SK-N-SH (cell line): ENCODE measurements at regions of chr5 and their contacts with region 1.

Region 1: GRCh38 chr5:172450861-172451695 is 3.2 kb downstream of the SH3PXD2B start:
- DNase-seq: peak; percentile 64
- H3K4me3 ChIP-seq: no peak overlapping the region; a peak in 1 of 4 replicates
- H3K27ac ChIP-seq: peak overlapping the region in 1 of 2 experiments; percentile 92; a peak in 2 of 4 replicates
- H3K4me1 ChIP-seq: peaks cover 16 to 36% of the 10 kb centered on the region in 2 experiments; a peak in 2 of 4 replicates
- H3K27me3 ChIP-seq: no peaks in the 10 kb centered on the region
- CTCF ChIP-seq: peak; percentile 82
- EP300 ChIP-seq: no peak
- RAD21 ChIP-seq: peak; percentile 46

Region 2: DNA sequence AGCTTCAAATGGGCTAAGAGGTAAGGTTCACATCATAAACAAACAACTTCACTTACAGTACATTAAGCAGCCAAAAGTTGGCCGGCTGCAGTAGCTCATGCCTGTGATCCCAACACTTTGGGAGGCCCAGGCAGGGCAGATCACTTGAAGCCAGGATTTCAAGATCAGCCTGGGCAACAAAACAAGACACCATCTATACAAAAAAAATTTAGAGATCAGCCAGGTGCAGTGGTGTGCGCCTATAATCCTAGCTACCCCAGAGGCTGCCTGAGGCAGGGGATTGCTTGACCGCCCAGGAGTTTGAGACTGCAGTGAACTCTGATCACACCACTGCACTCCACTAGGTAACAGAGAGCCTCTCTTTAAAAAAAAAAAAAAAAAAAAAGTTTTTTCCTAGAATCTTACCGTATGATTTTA is 184.4 kb before region 1 on chr5:
- CTCF ChIA-PET with region 1: no interaction called
- POLR2A ChIA-PET with region 1: no interaction called
- DNase-seq: no peak
- H3K4me3 ChIP-seq: no peak overlapping the region
- H3K27ac ChIP-seq: no peak overlapping the region
- H3K4me1 ChIP-seq: no peaks in the 10 kb centered on the region
- H3K27me3 ChIP-seq: no peaks in the 10 kb centered on the region
- CTCF ChIP-seq: no peak
- EP300 ChIP-seq: no peak
- RAD21 ChIP-seq: no peak

Region 3: GRCh38 chr5:172347496-172348052 is 103.5 kb before region 1 on chr5:
- CTCF ChIA-PET with region 1: interaction called, 12 read pairs
- POLR2A ChIA-PET with region 1: no interaction called
- DNase-seq: no peak
- H3K4me3 ChIP-seq: no peak overlapping the region
- H3K27ac ChIP-seq: no peak overlapping the region
- H3K4me1 ChIP-seq: no peaks in the 10 kb centered on the region
- H3K27me3 ChIP-seq: no peaks in the 10 kb centered on the region
- CTCF ChIP-seq: no peak
- EP300 ChIP-seq: no peak
- RAD21 ChIP-seq: no peak

Region 4: DNA sequence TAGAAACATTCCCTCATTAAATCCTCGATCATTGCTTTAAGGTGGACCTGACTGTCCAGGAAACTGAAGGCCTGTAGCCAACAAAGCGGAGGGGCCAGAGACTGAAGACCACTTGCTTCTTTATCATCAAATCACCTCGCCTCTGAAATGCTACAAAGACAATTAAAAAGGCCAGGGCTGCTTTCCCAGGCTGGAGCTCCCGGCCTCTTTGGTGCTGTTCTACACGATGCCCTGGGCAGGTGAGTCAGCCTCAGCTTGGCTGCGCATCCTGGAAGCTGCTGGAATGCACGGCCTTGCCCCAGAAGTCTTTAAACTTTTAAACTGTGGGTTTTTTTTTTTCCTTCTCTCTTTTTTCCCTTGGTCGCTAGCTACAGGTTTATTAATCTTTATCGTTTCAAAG is 43.3 kb before region 1 on chr5:
- CTCF ChIA-PET with region 1: interaction called, 19 read pairs
- POLR2A ChIA-PET with region 1: no interaction called
- DNase-seq: no peak
- H3K4me3 ChIP-seq: no peak overlapping the region
- H3K27ac ChIP-seq: peak overlapping the region in 1 of 2 experiments; percentile 8; a peak in 2 of 4 replicates
- H3K4me1 ChIP-seq: peaks cover 16 to 21% of the 10 kb centered on the region in 2 experiments
- H3K27me3 ChIP-seq: no peaks in the 10 kb centered on the region
- CTCF ChIP-seq: no peak
- EP300 ChIP-seq: no peak
- RAD21 ChIP-seq: no peak

Region 5: GRCh38 chr5:172420240-172420943 is 30.7 kb before region 1 on chr5:
- CTCF ChIA-PET with region 1: interaction called, 25 read pairs
- POLR2A ChIA-PET with region 1: no interaction called
- DNase-seq: no peak
- H3K4me3 ChIP-seq: no peak overlapping the region
- H3K27ac ChIP-seq: peak overlapping the region in 1 of 2 experiments; percentile 71; a peak in 1 of 4 replicates
- H3K4me1 ChIP-seq: peaks cover 30 to 32% of the 10 kb centered on the region in 2 experiments
- H3K27me3 ChIP-seq: no peaks in the 10 kb centered on the region
- CTCF ChIP-seq: no peak
- EP300 ChIP-seq: no peak
- RAD21 ChIP-seq: no peak

Region 6: DNA sequence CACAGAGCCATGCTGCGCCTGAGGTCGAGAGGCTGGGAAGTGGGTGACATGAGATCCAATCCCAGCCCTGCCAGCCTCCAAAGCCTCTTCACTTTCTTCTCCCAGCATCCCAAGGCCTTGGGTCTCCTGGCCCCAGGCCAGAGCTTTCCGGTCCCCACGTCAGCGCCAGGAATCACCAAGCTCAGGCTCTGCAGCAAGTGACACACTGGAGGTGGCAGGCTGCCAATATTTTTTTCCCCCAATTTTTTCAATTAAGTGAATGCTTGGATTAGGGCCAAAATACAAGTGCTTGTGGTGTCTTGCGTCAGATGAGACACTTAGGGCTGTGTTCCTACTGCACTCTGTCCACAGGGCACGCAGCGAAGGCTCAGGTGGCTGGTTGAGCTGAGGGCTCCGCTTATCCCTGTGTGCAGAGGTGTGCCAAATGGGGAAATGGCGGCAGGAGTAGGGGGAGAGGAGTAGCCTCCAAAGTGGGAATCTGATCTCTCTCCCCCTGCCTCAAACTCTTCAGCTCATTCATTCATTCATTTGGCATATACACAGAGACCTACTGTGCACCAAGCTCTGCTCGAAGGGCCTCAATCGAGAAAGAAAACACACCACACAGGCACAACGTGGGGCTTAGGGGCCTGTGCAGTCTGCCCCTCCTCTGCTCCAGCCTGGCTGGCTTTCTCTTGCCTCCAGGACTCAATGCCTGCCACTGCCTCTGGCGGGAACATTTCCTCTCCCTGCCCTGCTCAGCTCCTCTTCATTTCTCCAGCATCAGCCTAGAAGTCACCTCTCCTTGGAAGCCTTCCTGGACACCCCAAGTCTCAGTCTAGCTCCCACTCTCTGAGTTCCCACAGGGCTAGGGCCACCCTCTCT is 13.4 kb before region 1 on chr5:
- CTCF ChIA-PET with region 1: interaction called, 91 read pairs
- POLR2A ChIA-PET with region 1: interaction called, 4 read pairs
- DNase-seq: peak; percentile 88
- H3K4me3 ChIP-seq: no peak overlapping the region
- H3K27ac ChIP-seq: peak overlapping the region; percentile 35 to 47; a peak in 2 of 4 replicates
- H3K4me1 ChIP-seq: peaks cover 17 to 33% of the 10 kb centered on the region in 2 experiments; a peak in 2 of 4 replicates
- H3K27me3 ChIP-seq: no peaks in the 10 kb centered on the region
- CTCF ChIP-seq: no peak
- EP300 ChIP-seq: peak in 1 of 2 experiments; percentile 75; a peak in 3 of 4 replicates
- RAD21 ChIP-seq: 0 out of 2 replicates have a peak, but pooled peaks have one; percentile 10

Region 7: GRCh38 chr5:172733131-172733973 is 282.3 kb after region 1 on chr5:
- CTCF ChIA-PET with region 1: no interaction called
- POLR2A ChIA-PET with region 1: no interaction called
- DNase-seq: no peak
- H3K4me3 ChIP-seq: no peak overlapping the region
- H3K27ac ChIP-seq: no peak overlapping the region
- H3K4me1 ChIP-seq: no peaks in the 10 kb centered on the region
- H3K27me3 ChIP-seq: no peaks in the 10 kb centered on the region
- CTCF ChIP-seq: no peak
- EP300 ChIP-seq: no peak
- RAD21 ChIP-seq: no peak